ENCODE measurements at regions of chr10 and their contacts with region 1.

Region 1: DNA sequence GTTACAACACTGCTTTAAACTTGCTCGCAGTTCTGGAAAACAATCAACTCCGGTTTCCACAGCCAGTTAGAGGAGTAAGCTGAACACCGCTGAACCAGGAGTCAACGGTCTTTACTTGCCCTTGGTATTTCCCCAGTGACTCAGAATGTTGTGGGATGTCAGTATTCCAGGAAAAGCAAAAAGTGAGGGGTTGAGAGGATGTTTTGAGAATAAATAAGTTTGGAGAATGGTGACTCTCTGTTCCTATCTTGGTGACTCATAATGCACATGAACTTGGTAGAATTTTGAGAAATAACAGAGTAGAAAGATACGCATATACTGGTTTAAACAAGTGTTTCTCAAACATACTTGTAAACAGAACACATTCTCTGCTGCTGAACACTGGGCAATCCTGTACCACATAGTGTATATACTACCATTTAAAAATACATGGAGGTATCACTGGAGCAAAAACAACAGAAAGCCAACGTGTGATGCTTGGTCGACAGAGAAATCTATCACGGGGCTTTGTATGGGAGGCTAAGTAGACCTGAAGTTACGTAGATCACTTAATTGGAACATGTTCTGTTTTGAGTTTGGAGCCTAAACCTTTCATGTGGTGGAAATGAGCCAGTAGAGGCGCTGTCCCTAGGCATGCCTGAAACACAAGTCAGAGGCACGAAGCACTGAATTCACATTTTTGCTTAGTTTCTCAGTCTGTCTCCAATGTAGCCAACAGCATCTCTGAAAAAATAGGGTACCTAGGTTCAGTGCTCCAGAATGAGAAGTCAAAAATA is 534.3 kb downstream of the PARD3 start:
- DNase-seq: peak; percentile 28
- ATAC-seq: peak; percentile 80
- H3K4me3 Mint-ChIP-seq: no peak overlapping the region
- H3K27ac Mint-ChIP-seq: peak overlapping the region; percentile 72
- H3K4me1 Mint-ChIP-seq: peaks cover 25% of the 10 kb centered on the region
- H3K27me3 Mint-ChIP-seq: peaks cover 5% of the 10 kb centered on the region

Region 2: GRCh38 chr10:35433851-35434426 is 1153.2 kb after region 1 on chr10:
- CTCF ChIA-PET with region 1: no interaction called
- POLR2A ChIA-PET with region 1: no interaction called
- intact Hi-C with region 1: loop called in 1 of 2 experiments (anchors 10 kb)
- DNase-seq: no peak
- ATAC-seq: peak; percentile 49
- H3K4me3 Mint-ChIP-seq: no peak overlapping the region
- H3K27ac Mint-ChIP-seq: no peak overlapping the region
- H3K4me1 Mint-ChIP-seq: peaks cover 31% of the 10 kb centered on the region
- H3K27me3 Mint-ChIP-seq: no peaks in the 10 kb centered on the region